ENCODE measurements at regions of chr1 and their contacts with region 1.

Region 1: GRCh38 chr1:78070758-78071157 is 25.0 kb downstream of the GIPC2 start:
- DNase-seq: peak; percentile 87
- H3K4me3 ChIP-seq: no peak overlapping the region
- H3K27ac ChIP-seq: peak overlapping the region; percentile 48
- H3K4me1 ChIP-seq: peaks cover 54% of the 10 kb centered on the region
- H3K27me3 ChIP-seq: no peaks in the 10 kb centered on the region
- CTCF ChIP-seq: no peak
- POLR2A ChIP-seq: no peak

Region 2: GRCh38 chr1:77688939-77689338 is 381.8 kb before region 1 on chr1:
- CTCF ChIA-PET with region 1: no interaction called
- POLR2A ChIA-PET with region 1: no interaction called
- dilution Hi-C with region 1: no loop called
- intact Hi-C with region 1: no loop called
- DNase-seq: no peak
- H3K4me3 ChIP-seq: no peak overlapping the region
- H3K27ac ChIP-seq: no peak overlapping the region
- H3K4me1 ChIP-seq: peaks cover 5% of the 10 kb centered on the region
- H3K27me3 ChIP-seq: no peaks in the 10 kb centered on the region
- CTCF ChIP-seq: no peak
- POLR2A ChIP-seq: no peak

Region 3: DNA sequence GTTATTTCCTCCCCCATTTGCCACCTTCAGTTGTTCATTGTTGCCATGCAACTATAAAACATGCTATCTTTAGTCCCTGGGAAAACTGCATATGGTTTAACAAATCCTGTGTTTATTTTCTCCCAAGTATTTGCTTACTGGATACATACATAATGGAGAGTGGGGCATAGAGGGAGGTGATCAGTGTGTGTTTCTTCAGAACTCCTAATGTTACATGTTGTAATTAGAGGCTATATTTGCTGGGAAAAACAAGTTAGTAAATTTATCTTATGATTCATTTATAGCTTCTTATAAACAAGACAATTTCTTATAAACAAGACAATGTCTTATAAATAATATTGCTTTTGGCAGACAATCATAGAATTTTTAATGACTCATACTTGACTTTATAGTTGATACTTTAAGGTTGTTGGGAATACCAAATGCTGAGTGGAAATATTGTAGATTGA is 32.2 kb before region 1 on chr1:
- CTCF ChIA-PET with region 1: interaction called, 4 read pairs
- POLR2A ChIA-PET with region 1: no interaction called
- dilution Hi-C with region 1: no loop called
- intact Hi-C with region 1: loop called (anchors 1 kb)
- DNase-seq: peak; percentile 91
- H3K4me3 ChIP-seq: no peak overlapping the region
- H3K27ac ChIP-seq: peak overlapping the region; percentile 59
- H3K4me1 ChIP-seq: peaks cover 16% of the 10 kb centered on the region
- H3K27me3 ChIP-seq: no peaks in the 10 kb centered on the region
- CTCF ChIP-seq: no peak
- POLR2A ChIP-seq: no peak